ENCODE measurements at regions of chr2 and their contacts with region 1.

Region 1: DNA sequence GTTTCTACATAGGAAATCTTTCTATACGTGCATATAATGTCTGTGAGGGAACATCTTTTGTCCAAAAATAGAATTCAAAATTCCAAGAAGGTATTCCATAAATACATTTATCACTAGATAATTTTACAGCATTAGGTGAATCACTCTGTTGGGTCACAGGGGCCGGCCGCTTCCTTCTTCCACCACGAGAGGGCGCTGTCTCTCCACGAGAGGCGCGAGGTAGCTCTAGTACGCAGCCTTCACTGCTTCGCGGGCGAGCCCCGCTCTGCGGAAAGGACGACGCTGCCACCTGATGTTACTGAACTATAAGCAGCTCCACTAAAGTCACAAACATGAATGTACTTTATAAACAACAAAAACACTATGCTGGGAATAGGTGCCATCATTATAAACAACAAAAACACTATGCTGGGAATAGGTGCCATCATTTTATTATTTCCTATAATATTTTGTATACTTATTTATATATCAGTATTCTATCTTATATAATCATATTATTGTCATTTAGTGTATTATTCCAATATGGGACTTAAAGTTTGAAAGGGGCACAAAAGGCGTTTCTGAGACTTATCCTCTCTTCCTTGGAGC is 69.4 kb upstream of the REV1 start:
- DNase-seq: peak; percentile 93
- ATAC-seq: peak; percentile 98

Region 2: GRCh38 chr2:99818842-99819241 is 259.7 kb after region 1 on chr2:
- intact Hi-C with region 1: loop called (anchors 10 kb)
- DNase-seq: no peak
- ATAC-seq: no peak

Region 3: GRCh38 chr2:100242891-100243619 is 683.9 kb after region 1 on chr2:
- intact Hi-C with region 1: loop called (anchors 5 kb)
- DNase-seq: peak; percentile 85
- ATAC-seq: peak; percentile 94

Region 4: DNA sequence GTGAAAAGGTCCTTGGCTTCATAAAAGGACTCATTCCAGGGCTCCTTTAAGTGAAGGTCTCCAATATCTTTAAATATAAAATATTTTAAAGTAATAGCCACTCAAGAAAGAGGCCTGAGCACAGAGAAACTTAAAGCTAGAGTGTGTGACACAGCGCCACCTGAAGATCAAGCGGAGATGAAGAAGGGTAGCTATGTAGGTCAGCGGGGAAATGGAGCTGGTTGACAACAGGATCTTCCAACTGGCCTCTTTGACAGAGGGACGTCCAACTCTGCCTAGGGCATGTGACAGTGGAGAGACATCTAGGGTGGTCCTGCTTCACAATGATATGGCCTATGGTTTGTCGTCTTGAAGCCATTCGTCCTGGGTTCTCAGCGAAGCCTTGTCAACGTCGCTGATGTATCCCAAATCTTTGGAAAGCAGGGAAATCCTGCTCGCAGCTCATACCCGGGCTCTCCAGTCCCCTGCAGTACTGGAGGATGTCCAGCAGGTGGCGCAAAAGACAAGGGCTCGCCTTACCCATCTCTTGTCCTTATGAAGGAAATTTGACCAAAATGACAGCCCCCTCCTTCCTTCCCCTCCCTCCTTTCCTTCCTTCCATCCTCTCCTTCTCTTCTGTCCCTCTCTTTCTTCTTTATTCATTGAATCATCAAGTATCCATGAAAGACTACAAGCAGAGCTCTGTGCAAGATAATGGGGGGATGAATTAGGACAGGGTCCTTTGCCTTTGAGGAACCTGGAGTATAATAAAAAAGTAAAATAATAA is 703.6 kb after region 1 on chr2:
- intact Hi-C with region 1: loop called (anchors 5 kb)
- DNase-seq: peak; percentile 84
- ATAC-seq: peak; percentile 77